Caco-2 (cell line): ENCODE measurements at regions of chr12 and their contacts with region 1.

Region 1: GRCh38 chr12:101839324-101840283 is 8.8 kb upstream of the GNPTAB start:
- DNase-seq: peak; percentile 59 to 78
- H3K4me3 ChIP-seq: no peak overlapping the region
- H3K4me3 Mint-ChIP-seq: no peak overlapping the region
- H3K27ac Mint-ChIP-seq: no peak overlapping the region
- H3K4me1 ChIP-seq: no peaks in the 10 kb centered on the region
- H3K4me1 Mint-ChIP-seq: no peaks in the 10 kb centered on the region
- H3K27me3 ChIP-seq: no peaks in the 10 kb centered on the region
- H3K27me3 Mint-ChIP-seq: no peaks in the 10 kb centered on the region
- CTCF ChIP-seq: peak; percentile 78 to 90

Region 2: DNA sequence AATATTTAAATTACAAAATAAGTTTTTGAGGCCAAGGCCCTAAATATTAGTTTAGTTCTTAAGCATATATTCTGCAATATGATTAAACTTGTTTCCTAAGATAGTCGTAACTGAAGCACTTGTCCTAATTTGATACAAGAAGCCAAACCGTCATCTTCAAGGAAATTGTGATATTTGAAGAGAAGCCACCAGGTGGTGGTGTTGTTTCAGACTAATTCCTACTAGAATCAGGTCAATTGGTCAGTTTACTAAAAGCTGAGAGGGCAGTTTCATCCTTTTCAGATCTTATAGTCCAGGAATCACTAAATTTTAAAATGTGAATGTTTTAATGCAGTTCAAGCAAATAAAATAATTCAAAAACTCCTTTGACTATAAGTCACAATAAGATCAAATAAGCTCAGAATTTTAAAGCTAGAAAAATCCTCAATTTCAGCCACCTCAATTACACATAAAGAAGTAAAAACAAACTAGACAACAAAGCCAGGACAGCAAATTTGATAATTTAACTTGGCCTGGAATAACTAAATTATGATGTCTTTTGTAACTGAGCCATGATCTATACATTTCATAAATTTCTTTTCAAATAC is 425.0 kb before region 1 on chr12:
- CTCF ChIA-PET with region 1: no interaction called
- POLR2A ChIA-PET with region 1: no interaction called
- intact Hi-C with region 1: loop called (anchors 2 kb)
- DNase-seq: peak in 1 of 2 experiments; percentile 65
- H3K4me3 ChIP-seq: no peak overlapping the region
- H3K4me3 Mint-ChIP-seq: no peak overlapping the region
- H3K27ac Mint-ChIP-seq: no peak overlapping the region
- H3K4me1 ChIP-seq: no peaks in the 10 kb centered on the region
- H3K4me1 Mint-ChIP-seq: no peaks in the 10 kb centered on the region
- H3K27me3 ChIP-seq: no peaks in the 10 kb centered on the region
- H3K27me3 Mint-ChIP-seq: no peaks in the 10 kb centered on the region
- CTCF ChIP-seq: peak; percentile 42 to 58

Region 3: DNA sequence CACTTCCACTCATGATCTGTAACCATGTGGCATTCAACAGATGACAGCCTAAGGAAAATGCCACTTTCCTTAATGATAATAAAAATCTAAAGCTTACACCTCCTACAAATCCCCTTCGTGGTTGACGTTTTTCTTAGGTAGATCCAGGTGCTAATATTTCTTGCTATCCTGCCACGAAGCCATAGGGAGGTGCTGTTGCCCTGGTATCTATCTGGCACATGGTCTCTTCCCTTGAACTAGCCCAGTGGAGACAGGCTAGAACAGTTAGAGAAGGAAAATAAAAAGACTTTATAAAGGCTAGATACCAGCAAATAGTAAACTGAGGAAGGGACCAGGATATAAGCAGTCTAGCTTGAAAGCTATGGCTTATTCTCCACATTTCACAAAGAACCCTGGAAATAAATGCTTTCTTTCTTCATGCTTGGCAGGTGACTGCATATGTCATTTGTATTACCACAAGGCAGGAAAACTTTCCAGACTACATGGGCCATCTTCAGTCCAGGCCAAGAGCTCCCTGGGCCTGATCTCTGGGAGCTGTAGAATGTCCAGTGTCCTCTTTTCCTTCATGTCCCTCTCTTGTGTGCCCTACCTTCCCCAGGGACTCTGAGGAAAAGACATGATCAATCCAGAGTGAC is 349.2 kb before region 1 on chr12:
- CTCF ChIA-PET with region 1: no interaction called
- POLR2A ChIA-PET with region 1: no interaction called
- intact Hi-C with region 1: loop called (anchors 2 kb)
- DNase-seq: peak; percentile 44 to 55
- H3K4me3 ChIP-seq: no peak overlapping the region
- H3K4me3 Mint-ChIP-seq: no peak overlapping the region
- H3K27ac Mint-ChIP-seq: no peak overlapping the region
- H3K4me1 ChIP-seq: 0 out of 2 replicates have a peak, but pooled peaks cover 3% of the 10 kb centered on the region
- H3K4me1 Mint-ChIP-seq: no peaks in the 10 kb centered on the region
- H3K27me3 ChIP-seq: no peaks in the 10 kb centered on the region
- H3K27me3 Mint-ChIP-seq: no peaks in the 10 kb centered on the region
- CTCF ChIP-seq: peak; percentile 58 to 80

Region 4: DNA sequence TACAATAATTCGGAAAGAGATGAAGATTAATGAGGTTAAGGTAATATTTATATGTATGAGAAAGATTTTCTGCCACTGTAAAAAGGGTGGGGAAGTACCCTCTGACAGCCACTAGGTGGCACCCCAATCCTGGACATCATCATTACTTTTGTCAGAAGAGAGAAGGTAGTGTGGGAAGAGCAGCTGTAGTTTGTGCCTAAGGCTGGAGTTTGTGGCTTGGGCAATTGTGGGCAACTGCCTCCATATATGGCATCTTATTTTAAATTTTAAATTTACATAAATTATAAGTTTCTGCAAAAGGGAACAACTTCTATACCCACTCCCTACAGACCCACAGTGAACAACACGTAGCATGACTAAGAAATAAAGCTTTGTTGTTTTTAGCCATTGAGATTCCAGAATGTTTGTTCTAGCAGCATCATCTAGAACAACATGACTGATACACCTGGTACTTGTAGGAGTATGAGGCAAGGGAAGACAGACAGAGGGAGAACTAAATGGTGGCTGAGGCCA is 65.9 kb before region 1 on chr12:
- CTCF ChIA-PET with region 1: interaction called, 14 read pairs
- POLR2A ChIA-PET with region 1: interaction called, 4 read pairs
- intact Hi-C with region 1: loop called (anchors 1 kb)
- DNase-seq: peak; percentile 53 to 65
- H3K4me3 ChIP-seq: no peak overlapping the region
- H3K4me3 Mint-ChIP-seq: no peak overlapping the region
- H3K27ac Mint-ChIP-seq: no peak overlapping the region
- H3K4me1 ChIP-seq: no peaks in the 10 kb centered on the region
- H3K4me1 Mint-ChIP-seq: peaks cover 7% of the 10 kb centered on the region
- H3K27me3 ChIP-seq: no peaks in the 10 kb centered on the region
- H3K27me3 Mint-ChIP-seq: no peaks in the 10 kb centered on the region
- CTCF ChIP-seq: peak; percentile 84 to 91

Region 5: GRCh38 chr12:101792051-101792931 is 47.3 kb before region 1 on chr12:
- CTCF ChIA-PET with region 1: interaction called, 4 read pairs
- POLR2A ChIA-PET with region 1: no interaction called
- intact Hi-C with region 1: loop called (anchors 1 kb)
- DNase-seq: peak; percentile 14 to 55
- H3K4me3 ChIP-seq: no peak overlapping the region
- H3K4me3 Mint-ChIP-seq: no peak overlapping the region
- H3K27ac Mint-ChIP-seq: no peak overlapping the region
- H3K4me1 ChIP-seq: peaks cover 12% of the 10 kb centered on the region; the same call in 1 of the 2 replicates
- H3K4me1 Mint-ChIP-seq: peaks cover 16% of the 10 kb centered on the region
- H3K27me3 ChIP-seq: no peaks in the 10 kb centered on the region
- H3K27me3 Mint-ChIP-seq: no peaks in the 10 kb centered on the region
- CTCF ChIP-seq: peak in 1 of 2 experiments; percentile 44